ENCODE measurements at regions of chr7 and their contacts with region 1.

Region 1: GRCh38 chr7:157875230-157876179 is 538.7 kb downstream of the DNAJB6 start:
- DNase-seq: peak; percentile 68
- H3K4me3 Mint-ChIP-seq: peak overlapping the region; percentile 60
- H3K27ac Mint-ChIP-seq: peak overlapping the region; percentile 21
- H3K4me1 Mint-ChIP-seq: peaks cover 41% of the 10 kb centered on the region
- H3K27me3 Mint-ChIP-seq: no peaks in the 10 kb centered on the region

Region 2: GRCh38 chr7:157397731-157398691 is 477.5 kb before region 1 on chr7:
- CTCF ChIA-PET with region 1: no interaction called
- intact Hi-C with region 1: loop called (anchors 1 kb)
- DNase-seq: peak; percentile 31
- H3K4me3 Mint-ChIP-seq: no peak overlapping the region
- H3K27ac Mint-ChIP-seq: no peak overlapping the region
- H3K4me1 Mint-ChIP-seq: peaks cover 6% of the 10 kb centered on the region
- H3K27me3 Mint-ChIP-seq: no peaks in the 10 kb centered on the region

Region 3: DNA sequence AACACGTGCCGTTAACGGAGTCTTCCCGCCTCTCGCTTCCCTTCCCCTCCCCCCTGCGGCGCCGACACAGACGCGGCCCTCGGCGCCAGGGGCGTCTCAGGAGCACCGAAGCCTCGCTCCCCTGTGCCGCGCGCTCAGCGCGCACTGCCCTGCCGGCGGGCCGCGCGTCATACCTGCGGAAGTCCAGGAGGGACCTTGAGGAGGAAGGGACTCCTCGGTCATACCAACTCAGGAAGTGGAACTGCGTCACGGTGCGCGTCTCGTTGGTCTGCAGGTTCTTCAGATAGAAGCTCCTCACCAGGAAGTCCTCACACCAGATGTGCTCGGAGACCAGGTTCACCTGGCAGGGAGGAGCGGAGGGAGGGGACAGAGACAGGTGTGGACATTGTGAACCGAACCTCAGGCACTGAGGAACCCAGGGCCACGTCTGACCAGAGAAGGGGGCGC is 299.0 kb before region 1 on chr7:
- CTCF ChIA-PET with region 1: no interaction called
- intact Hi-C with region 1: no loop called
- DNase-seq: peak; percentile 79
- H3K4me3 Mint-ChIP-seq: peak overlapping the region; percentile 73
- H3K27ac Mint-ChIP-seq: peak overlapping the region; percentile 63
- H3K4me1 Mint-ChIP-seq: peaks cover 23% of the 10 kb centered on the region
- H3K27me3 Mint-ChIP-seq: no peaks in the 10 kb centered on the region

Region 4: GRCh38 chr7:157851501-157852067 is 23.9 kb before region 1 on chr7:
- CTCF ChIA-PET with region 1: no interaction called
- intact Hi-C with region 1: loop called (anchors 2 kb)
- DNase-seq: peak; percentile 93
- H3K4me3 Mint-ChIP-seq: peak overlapping the region; percentile 56
- H3K27ac Mint-ChIP-seq: peak overlapping the region; percentile 74
- H3K4me1 Mint-ChIP-seq: peaks cover 13% of the 10 kb centered on the region
- H3K27me3 Mint-ChIP-seq: no peaks in the 10 kb centered on the region

Region 5: GRCh38 chr7:157905651-157906461 is 30.4 kb after region 1 on chr7:
- CTCF ChIA-PET with region 1: no interaction called
- intact Hi-C with region 1: no loop called
- DNase-seq: no peak
- H3K4me3 Mint-ChIP-seq: no peak overlapping the region
- H3K27ac Mint-ChIP-seq: no peak overlapping the region
- H3K4me1 Mint-ChIP-seq: peaks cover 4% of the 10 kb centered on the region
- H3K27me3 Mint-ChIP-seq: no peaks in the 10 kb centered on the region

Region 6: GRCh38 chr7:158228986-158229385 is 353.5 kb after region 1 on chr7:
- CTCF ChIA-PET with region 1: no interaction called
- intact Hi-C with region 1: no loop called
- DNase-seq: no peak
- H3K4me3 Mint-ChIP-seq: no peak overlapping the region
- H3K27ac Mint-ChIP-seq: no peak overlapping the region
- H3K4me1 Mint-ChIP-seq: no peaks in the 10 kb centered on the region
- H3K27me3 Mint-ChIP-seq: peaks cover 7% of the 10 kb centered on the region